Naive thymus-derived CD4-positive, alpha-beta T cell (primary cell): ENCODE measurements at regions of chr22 and their contacts with region 1.

Region 1: GRCh38 chr22:40044102-40044869 is 49.5 kb downstream of the FAM83F start:
- DNase-seq: peak; percentile 87 to 100 (median 99)
- ATAC-seq: peak; percentile 92
- H3K4me3 ChIP-seq: peak overlapping the region; percentile 81
- H3K4me3 Mint-ChIP-seq: peak overlapping the region; percentile 94 to 99 (median 98)
- H3K27ac ChIP-seq: peak overlapping the region; percentile 88
- H3K27ac Mint-ChIP-seq: peak overlapping the region; percentile 98 to 100 (median 99)
- H3K4me1 ChIP-seq: peaks cover 15 to 29% of the 10 kb centered on the region in 2 donors
- H3K4me1 Mint-ChIP-seq: peaks cover 23 to 53% (median 40%) of the 10 kb centered on the region in 7 donors
- H3K27me3 ChIP-seq: no peaks in the 10 kb centered on the region
- H3K27me3 Mint-ChIP-seq: peaks cover 3 to 17% (median 7%) of the 10 kb centered on the region in 5 donors

Region 2: GRCh38 chr22:39152511-39153219 is 891.6 kb before region 1 on chr22 and contains the start of gene CBX7:
- CTCF ChIA-PET with region 1: no interaction called
- POLR2A ChIA-PET with region 1: no interaction called
- intact Hi-C with region 1: loop called (anchors 1 to 5 kb)
- DNase-seq: peak; percentile 91 to 98 (median 94)
- ATAC-seq: peak; percentile 93
- H3K4me3 ChIP-seq: peak within 1 kb of the TSS; percentile 95
- H3K4me3 Mint-ChIP-seq: peak within 1 kb of the TSS; percentile 83 to 99 (median 92)
- H3K27ac ChIP-seq: peak within 1 kb of the TSS; percentile 89
- H3K27ac Mint-ChIP-seq: peak within 1 kb of the TSS; percentile 87 to 96 (median 91)
- H3K4me1 ChIP-seq: peaks cover 31 to 46% of the 10 kb centered on the region in 2 donors
- H3K4me1 Mint-ChIP-seq: peaks cover 7 to 41% (median 35%) of the 10 kb centered on the region in 7 donors
- H3K27me3 ChIP-seq: no peaks in the 10 kb centered on the region
- H3K27me3 Mint-ChIP-seq: peaks cover 0 to 41% (median 0%) of the 10 kb centered on the region in 5 donors
- total RNA-seq, gene CBX7: 14.2 to 164 (median 76.9) TPM

Region 3: DNA sequence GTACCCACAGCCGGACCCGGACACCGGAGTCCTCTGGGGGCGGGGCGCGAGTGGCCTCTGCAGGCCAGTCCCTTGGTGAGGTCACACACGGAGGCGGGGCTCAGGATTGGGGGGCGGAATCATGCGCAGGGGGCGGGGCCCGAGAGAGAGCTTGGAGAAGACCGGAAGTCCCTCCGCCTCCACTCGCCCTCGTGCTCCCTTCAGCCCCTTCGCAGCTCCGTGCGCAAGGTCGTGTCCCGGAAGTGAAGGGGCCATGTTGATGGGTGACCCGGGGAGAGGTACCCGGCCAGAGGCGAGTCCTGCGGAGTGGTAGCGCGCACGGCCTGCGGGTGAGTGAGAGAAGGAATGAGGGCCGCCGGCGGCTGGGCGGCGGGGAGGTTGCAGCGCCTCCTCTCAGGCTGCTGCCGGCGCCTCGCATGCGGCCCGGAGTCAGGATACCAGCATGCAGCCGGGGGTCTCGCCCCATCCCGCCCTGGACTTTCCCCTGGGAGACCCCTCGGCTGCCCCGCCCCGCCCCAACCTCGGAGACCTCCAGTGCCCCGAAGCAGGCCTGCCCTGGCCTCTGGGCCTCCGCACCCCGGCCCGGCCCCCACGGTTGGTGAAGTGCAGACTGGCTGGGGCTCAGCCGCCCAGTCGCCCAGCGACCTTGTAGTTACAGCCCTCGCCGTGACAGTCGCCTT is 542.0 kb before region 1 on chr22 and contains the start of gene MIEF1:
- CTCF ChIA-PET with region 1: no interaction called
- POLR2A ChIA-PET with region 1: interaction called, 5 read pairs
- intact Hi-C with region 1: loop called in 1 of 2 experiments (anchors 1 kb)
- DNase-seq: peak; percentile 71 to 95 (median 78)
- ATAC-seq: peak; percentile 99
- H3K4me3 ChIP-seq: peak within 1 kb of the TSS; percentile 59
- H3K4me3 Mint-ChIP-seq: peak within 1 kb of the TSS; percentile 75 to 100 (median 94)
- H3K27ac ChIP-seq: peak within 1 kb of the TSS; percentile 79
- H3K27ac Mint-ChIP-seq: peak within 1 kb of the TSS; percentile 86 to 97 (median 96)
- H3K4me1 ChIP-seq: peaks cover 16 to 21% of the 10 kb centered on the region in 2 donors
- H3K4me1 Mint-ChIP-seq: peaks cover 23 to 57% (median 47%) of the 10 kb centered on the region in 7 donors
- H3K27me3 ChIP-seq: no peaks in the 10 kb centered on the region
- H3K27me3 Mint-ChIP-seq: peaks cover 0 to 7% (median 0%) of the 10 kb centered on the region in 5 donors
- total RNA-seq, gene MIEF1: 17.5 to 42.3 (median 37.3) TPM

Region 4: DNA sequence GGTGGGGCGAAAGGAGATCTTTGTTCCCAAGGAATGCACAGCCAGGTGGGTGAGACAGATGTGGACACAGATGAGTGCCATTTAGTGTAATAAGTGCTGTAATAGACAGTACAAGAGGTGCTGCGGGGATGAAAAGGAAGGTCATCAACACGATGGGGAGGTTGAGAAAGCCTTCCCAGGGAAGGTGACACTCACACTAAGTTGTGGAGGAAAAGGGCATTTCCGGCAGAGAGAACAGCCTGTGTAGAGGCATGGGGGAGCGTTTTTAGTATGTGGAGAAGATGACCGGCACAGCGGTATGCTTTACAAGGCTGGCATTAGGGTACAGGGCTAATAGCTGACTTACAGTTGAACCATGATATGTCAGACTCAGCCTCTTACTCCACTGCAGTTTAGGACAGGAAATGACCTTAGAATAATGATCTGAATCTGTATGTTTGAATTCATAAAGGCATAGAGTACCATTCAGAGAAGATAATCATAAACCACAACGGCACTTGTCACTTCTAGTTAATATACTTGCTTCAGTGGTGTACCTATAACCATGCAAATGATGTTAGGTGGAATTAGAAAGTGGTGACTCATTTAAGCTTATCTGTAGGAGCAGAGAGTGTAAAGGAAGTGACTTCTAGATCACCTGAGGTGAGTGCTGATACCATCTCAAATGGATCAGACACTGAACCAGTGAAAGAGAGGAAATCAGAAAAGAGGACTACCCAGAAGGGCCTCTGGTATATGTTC is 11.0 kb after region 1 on chr22:
- CTCF ChIA-PET with region 1: no interaction called
- POLR2A ChIA-PET with region 1: interaction called, 44 read pairs
- intact Hi-C with region 1: loop called (anchors 1 kb)
- DNase-seq: peak in 7 of 9 donors; percentile 15 to 70 (median 39)
- ATAC-seq: peak; percentile 95
- H3K4me3 ChIP-seq: peak overlapping the region; percentile 21
- H3K4me3 Mint-ChIP-seq: peak overlapping the region; percentile 60 to 80 (median 70)
- H3K27ac ChIP-seq: peak overlapping the region; percentile 65
- H3K27ac Mint-ChIP-seq: peak overlapping the region; percentile 50 to 91 (median 84)
- H3K4me1 ChIP-seq: peaks cover 53 to 69% of the 10 kb centered on the region in 2 donors
- H3K4me1 Mint-ChIP-seq: peaks cover 63 to 95% (median 83%) of the 10 kb centered on the region in 7 donors
- H3K27me3 ChIP-seq: no peaks in the 10 kb centered on the region
- H3K27me3 Mint-ChIP-seq: no peaks in the 10 kb centered on the region

Region 5: DNA sequence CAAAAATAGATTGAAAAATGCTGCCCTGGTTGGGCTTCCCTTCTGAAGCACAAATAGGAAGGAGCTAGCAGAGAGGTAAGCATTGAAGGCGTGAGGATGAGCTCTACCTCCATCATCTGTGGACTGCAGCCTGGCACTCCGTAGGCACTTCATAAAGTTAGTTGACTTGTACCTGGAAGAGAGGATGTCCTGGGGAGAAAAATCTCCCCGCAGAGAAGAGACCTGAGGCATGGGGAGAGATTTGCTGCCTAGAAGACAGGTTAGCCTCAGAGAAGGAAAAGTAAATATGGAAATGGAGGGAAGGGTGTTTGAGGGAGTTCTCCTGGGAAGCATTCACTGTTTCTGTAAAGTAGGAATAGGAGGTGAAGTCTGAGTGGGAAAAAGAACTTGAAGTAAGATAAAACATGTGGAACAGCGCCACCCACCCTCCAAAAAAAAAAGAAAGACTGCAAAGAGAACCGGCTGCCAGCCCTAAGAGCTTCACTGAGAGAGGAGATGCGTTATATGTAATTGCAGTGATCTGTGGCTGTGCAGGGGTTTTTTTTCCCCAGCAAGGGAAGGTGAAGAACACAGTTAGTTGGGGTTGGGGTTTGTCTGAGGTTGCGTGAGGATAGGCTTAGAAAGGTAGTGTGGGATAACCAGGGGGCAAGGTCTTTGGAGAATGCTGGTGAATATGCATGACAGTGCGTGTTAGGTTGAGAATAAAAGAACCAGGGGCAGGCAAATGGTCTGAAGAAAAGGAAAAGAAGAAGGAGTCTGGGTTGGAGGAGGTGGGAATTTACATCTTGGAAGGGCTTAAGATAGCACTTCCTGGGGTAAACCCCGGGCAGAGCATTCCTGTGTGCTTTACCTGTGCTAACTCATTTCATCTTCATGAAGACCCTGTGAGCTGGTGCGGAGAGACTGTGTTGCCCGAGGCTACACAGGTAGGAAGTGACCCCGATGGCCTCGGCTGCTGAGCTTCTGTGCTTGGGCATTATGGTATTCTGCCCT is 149.4 kb after region 1 on chr22:
- CTCF ChIA-PET with region 1: interaction called, 5 read pairs
- POLR2A ChIA-PET with region 1: interaction called, 11 read pairs
- intact Hi-C with region 1: no loop called
- DNase-seq: peak in 1 of 9 donors; percentile 25
- ATAC-seq: peak; percentile 31
- H3K4me3 ChIP-seq: no peak overlapping the region
- H3K4me3 Mint-ChIP-seq: peak overlapping the region in 9 of 10 donors; percentile 21 to 66 (median 46)
- H3K27ac ChIP-seq: no peak overlapping the region
- H3K27ac Mint-ChIP-seq: peak overlapping the region; percentile 3 to 87 (median 81)
- H3K4me1 ChIP-seq: peaks cover 7 to 38% of the 10 kb centered on the region in 2 donors
- H3K4me1 Mint-ChIP-seq: peaks cover 49 to 94% (median 84%) of the 10 kb centered on the region in 7 donors
- H3K27me3 ChIP-seq: no peaks in the 10 kb centered on the region
- H3K27me3 Mint-ChIP-seq: no peaks in the 10 kb centered on the region

Region 6: DNA sequence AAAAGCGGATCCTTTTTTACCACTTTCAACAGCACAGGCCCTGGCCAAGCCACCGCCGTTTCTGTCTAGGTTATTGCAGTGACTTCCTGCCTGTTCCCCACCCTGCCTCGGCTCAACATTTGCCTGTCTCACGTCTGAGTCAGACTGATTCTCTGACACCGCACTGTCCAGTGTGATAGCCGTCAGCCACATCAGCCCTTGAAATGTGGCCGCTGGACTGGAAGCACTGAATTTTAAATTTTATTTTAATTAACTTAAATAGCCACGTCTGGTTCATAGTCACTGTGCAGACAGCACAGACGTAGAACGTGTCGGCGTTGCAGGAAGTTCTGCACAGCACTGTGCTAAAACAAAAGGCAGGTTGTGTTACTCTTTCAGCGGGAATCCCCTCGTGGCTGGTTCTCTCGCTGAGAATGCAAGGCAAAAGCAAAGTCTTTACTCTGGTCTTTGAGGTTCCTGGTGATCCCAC is 245.7 kb after region 1 on chr22:
- CTCF ChIA-PET with region 1: no interaction called
- POLR2A ChIA-PET with region 1: interaction called, 6 read pairs
- intact Hi-C with region 1: loop called in 1 of 2 experiments (anchors 1 kb)
- DNase-seq: peak; percentile 45 to 83 (median 75)
- ATAC-seq: peak; percentile 94
- H3K4me3 ChIP-seq: peak overlapping the region; percentile 15
- H3K4me3 Mint-ChIP-seq: peak overlapping the region; percentile 53 to 86 (median 78)
- H3K27ac ChIP-seq: peak overlapping the region; percentile 87
- H3K27ac Mint-ChIP-seq: peak overlapping the region; percentile 93 to 99 (median 96)
- H3K4me1 ChIP-seq: peaks cover 22 to 41% of the 10 kb centered on the region in 2 donors
- H3K4me1 Mint-ChIP-seq: peaks cover 25 to 80% (median 70%) of the 10 kb centered on the region in 7 donors
- H3K27me3 ChIP-seq: no peaks in the 10 kb centered on the region
- H3K27me3 Mint-ChIP-seq: no peaks in the 10 kb centered on the region

Region 7: GRCh38 chr22:40368016-40368415 is 323.7 kb after region 1 on chr22:
- CTCF ChIA-PET with region 1: no interaction called
- POLR2A ChIA-PET with region 1: interaction called, 3 read pairs
- intact Hi-C with region 1: loop called in 1 of 2 experiments (anchors 1 kb)
- DNase-seq: no peak
- ATAC-seq: no peak
- H3K4me3 ChIP-seq: no peak overlapping the region
- H3K4me3 Mint-ChIP-seq: peak overlapping the region in 2 of 10 donors; percentile 17 to 33
- H3K27ac ChIP-seq: no peak overlapping the region
- H3K27ac Mint-ChIP-seq: peak overlapping the region in 1 of 9 donors; percentile 41
- H3K4me1 ChIP-seq: peaks cover 3 to 13% of the 10 kb centered on the region in 2 donors
- H3K4me1 Mint-ChIP-seq: peaks cover 12 to 23% (median 17%) of the 10 kb centered on the region in 7 donors
- H3K27me3 ChIP-seq: no peaks in the 10 kb centered on the region
- H3K27me3 Mint-ChIP-seq: no peaks in the 10 kb centered on the region

Region 8: DNA sequence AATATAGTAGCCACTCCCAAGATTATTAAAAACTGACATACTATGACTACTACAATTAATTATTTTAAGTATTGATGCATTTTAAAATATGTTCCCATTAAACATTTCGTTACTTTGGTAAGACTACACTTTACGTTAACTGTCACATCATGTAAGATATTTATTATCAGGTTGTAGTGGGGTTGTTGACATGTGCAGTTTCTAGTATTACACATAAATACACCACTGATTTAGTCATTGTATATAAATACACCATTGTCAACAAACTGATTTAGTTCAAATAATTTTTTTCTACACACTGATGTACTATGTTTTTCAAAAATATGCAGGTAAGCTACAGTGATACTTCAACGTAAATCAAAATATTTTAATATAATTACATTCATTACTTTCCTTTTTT is 800.7 kb after region 1 on chr22:
- CTCF ChIA-PET with region 1: no interaction called
- POLR2A ChIA-PET with region 1: no interaction called
- intact Hi-C with region 1: no loop called
- DNase-seq: no peak
- ATAC-seq: no peak
- H3K4me3 ChIP-seq: no peak overlapping the region
- H3K4me3 Mint-ChIP-seq: no peak overlapping the region
- H3K27ac ChIP-seq: no peak overlapping the region
- H3K27ac Mint-ChIP-seq: peak overlapping the region in 2 of 9 donors; percentile 28 to 39
- H3K4me1 ChIP-seq: no peaks in the 10 kb centered on the region
- H3K4me1 Mint-ChIP-seq: peaks cover 0 to 30% (median 21%) of the 10 kb centered on the region in 7 donors
- H3K27me3 ChIP-seq: no peaks in the 10 kb centered on the region
- H3K27me3 Mint-ChIP-seq: no peaks in the 10 kb centered on the region